Activated CD8-positive, alpha-beta T cell treated with anti-CD3 and anti-CD28 coated beads for 36 hours (primary cell): ENCODE measurements at regions of chr11 and their contacts with region 1.

Region 1: GRCh38 chr11:126480410-126481302 is 125.2 kb downstream of the ST3GAL4 start:
- DNase-seq: peak; percentile 84
- ATAC-seq: peak; percentile 88
- H3K4me3 Mint-ChIP-seq: peak overlapping the region; percentile 36
- H3K27ac Mint-ChIP-seq: peak overlapping the region; percentile 81
- H3K4me1 Mint-ChIP-seq: peaks cover 18% of the 10 kb centered on the region
- H3K27me3 Mint-ChIP-seq: peaks cover 3% of the 10 kb centered on the region
- CTCF ChIP-seq: peak; percentile 87

Region 2: GRCh38 chr11:126318574-126319373 is 161.9 kb before region 1 on chr11:
- CTCF ChIA-PET with region 1: interaction called, 16 read pairs
- POLR2A ChIA-PET with region 1: interaction called, 3 read pairs
- intact Hi-C with region 1: no loop called
- DNase-seq: peak; percentile 55
- ATAC-seq: peak; percentile 77
- H3K4me3 Mint-ChIP-seq: peak overlapping the region; percentile 61
- H3K27ac Mint-ChIP-seq: peak overlapping the region; percentile 87
- H3K4me1 Mint-ChIP-seq: peaks cover 32% of the 10 kb centered on the region
- H3K27me3 Mint-ChIP-seq: no peaks in the 10 kb centered on the region
- CTCF ChIP-seq: no peak

Region 3: DNA sequence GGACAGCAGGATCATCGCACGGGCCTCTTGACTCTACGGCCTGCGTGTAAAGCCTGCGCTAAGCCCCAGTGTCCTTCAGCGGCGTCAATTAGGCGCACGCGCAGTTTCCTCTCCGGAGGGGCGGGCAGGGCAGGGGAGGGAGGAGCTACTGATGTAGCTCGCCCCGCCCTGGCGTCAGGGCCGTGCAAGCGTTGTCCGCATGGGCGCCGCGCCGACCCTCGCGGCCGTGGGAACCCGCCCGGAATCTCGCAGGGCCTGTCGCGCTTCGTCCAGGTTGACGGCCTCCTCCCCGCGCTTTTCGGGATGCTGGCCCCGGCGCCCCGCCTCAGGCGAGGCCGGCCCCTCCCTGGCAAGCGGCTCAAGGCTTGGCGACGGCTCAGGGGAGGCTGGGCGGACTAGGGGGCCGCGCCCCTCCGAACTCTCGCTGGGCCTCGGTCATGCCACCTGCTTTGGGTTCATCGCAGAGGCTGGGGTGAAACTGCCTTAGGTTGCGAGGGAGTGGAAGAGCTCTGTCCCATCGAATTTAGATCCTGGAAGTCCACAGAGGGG is 64.0 kb before region 1 on chr11:
- CTCF ChIA-PET with region 1: interaction called, 21 read pairs
- POLR2A ChIA-PET with region 1: no interaction called
- intact Hi-C with region 1: no loop called
- DNase-seq: peak; percentile 83
- ATAC-seq: peak; percentile 100
- H3K4me3 Mint-ChIP-seq: peak overlapping the region; percentile 54
- H3K27ac Mint-ChIP-seq: peak overlapping the region; percentile 55
- H3K4me1 Mint-ChIP-seq: peaks cover 19% of the 10 kb centered on the region
- H3K27me3 Mint-ChIP-seq: peaks cover 4% of the 10 kb centered on the region
- CTCF ChIP-seq: no peak

Region 4: GRCh38 chr11:126446581-126446980 is 34.1 kb before region 1 on chr11:
- CTCF ChIA-PET with region 1: interaction called, 76 read pairs
- POLR2A ChIA-PET with region 1: no interaction called
- intact Hi-C with region 1: loop called (anchors 1 kb)
- DNase-seq: no peak
- ATAC-seq: no peak
- H3K4me3 Mint-ChIP-seq: no peak overlapping the region
- H3K27ac Mint-ChIP-seq: no peak overlapping the region
- H3K4me1 Mint-ChIP-seq: no peaks in the 10 kb centered on the region
- H3K27me3 Mint-ChIP-seq: peaks cover 2% of the 10 kb centered on the region
- CTCF ChIP-seq: no peak

Region 5: DNA sequence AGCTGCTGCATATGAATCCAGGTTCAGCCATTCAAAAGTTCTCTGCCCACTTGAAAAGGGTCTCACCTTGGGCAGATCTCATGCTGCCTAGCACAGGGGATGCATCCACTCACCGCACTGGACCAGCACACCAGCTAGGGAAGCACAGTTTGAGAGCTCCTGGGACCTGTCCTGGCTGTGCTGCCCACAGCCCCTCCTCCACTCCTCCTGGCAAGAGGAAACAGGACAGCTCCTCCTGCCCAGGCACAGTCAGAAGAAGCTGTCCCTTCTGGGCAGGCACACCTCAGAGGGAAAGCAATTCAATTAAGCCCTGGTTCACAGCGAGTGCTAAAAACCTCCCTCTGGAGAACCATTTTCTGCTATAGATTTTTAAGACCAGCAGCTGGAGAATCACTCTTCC is 21.5 kb after region 1 on chr11:
- CTCF ChIA-PET with region 1: interaction called, 16 read pairs
- POLR2A ChIA-PET with region 1: interaction called, 3 read pairs
- intact Hi-C with region 1: no loop called
- DNase-seq: no peak
- ATAC-seq: no peak
- H3K4me3 Mint-ChIP-seq: no peak overlapping the region
- H3K27ac Mint-ChIP-seq: no peak overlapping the region
- H3K4me1 Mint-ChIP-seq: no peaks in the 10 kb centered on the region
- H3K27me3 Mint-ChIP-seq: peaks cover 26% of the 10 kb centered on the region
- CTCF ChIP-seq: no peak

Region 6: GRCh38 chr11:126538071-126538470 is 57.4 kb after region 1 on chr11:
- CTCF ChIA-PET with region 1: no interaction called
- POLR2A ChIA-PET with region 1: no interaction called
- intact Hi-C with region 1: no loop called
- DNase-seq: no peak
- ATAC-seq: no peak
- H3K4me3 Mint-ChIP-seq: no peak overlapping the region
- H3K27ac Mint-ChIP-seq: no peak overlapping the region
- H3K4me1 Mint-ChIP-seq: no peaks in the 10 kb centered on the region
- H3K27me3 Mint-ChIP-seq: peaks cover 4% of the 10 kb centered on the region
- CTCF ChIP-seq: no peak

Region 7: DNA sequence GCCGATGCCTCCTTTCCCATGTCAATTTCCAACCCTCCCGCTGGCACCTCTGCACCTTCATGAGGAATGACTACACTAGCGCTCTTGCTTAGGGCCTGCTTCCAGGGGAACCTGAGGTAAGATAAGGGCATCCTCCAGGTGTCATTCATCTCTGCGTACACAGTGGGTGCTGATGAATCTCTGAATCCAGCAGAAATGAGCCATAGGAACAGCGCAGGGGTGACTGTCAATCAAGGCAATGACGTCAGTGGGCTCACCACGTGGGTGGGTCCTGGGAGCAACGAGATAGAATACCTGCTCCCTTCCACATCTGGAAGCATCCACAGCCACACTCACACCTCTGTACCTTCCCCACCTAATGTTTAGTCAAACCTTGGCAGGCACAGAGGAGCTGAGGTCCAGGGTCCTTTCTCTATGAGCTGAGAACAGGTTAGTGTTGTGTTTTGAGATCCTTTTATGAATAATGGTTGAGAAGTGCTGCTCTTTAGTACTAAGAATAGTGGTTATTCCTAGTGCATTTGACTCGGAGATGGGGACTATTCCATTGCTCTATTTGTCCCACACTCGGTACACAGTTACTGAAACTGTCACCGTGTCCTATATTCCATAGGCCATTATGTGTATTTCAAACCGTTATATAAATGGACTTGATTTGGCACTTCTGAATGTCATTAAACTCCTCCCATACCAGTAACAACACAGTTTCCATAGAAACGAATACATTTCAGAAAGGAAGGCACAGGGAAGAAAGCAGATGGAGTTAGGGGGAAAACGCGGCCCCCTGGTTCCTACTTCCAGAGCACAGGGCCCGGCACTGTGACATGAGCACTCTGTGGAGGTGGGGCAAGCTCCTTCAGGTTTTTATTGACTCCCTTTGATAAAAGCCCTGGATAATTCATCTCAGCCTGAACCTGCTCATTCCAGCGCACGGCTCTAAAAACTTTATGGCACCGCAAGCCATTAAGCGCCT is 68.2 kb after region 1 on chr11:
- CTCF ChIA-PET with region 1: no interaction called
- POLR2A ChIA-PET with region 1: no interaction called
- intact Hi-C with region 1: no loop called
- DNase-seq: no peak
- ATAC-seq: no peak
- H3K4me3 Mint-ChIP-seq: no peak overlapping the region
- H3K27ac Mint-ChIP-seq: no peak overlapping the region
- H3K4me1 Mint-ChIP-seq: no peaks in the 10 kb centered on the region
- H3K27me3 Mint-ChIP-seq: peaks cover 4% of the 10 kb centered on the region
- CTCF ChIP-seq: no peak